GM12878 (cell line): ENCODE measurements at regions of chr11 and their contacts with region 1.

Region 1: DNA sequence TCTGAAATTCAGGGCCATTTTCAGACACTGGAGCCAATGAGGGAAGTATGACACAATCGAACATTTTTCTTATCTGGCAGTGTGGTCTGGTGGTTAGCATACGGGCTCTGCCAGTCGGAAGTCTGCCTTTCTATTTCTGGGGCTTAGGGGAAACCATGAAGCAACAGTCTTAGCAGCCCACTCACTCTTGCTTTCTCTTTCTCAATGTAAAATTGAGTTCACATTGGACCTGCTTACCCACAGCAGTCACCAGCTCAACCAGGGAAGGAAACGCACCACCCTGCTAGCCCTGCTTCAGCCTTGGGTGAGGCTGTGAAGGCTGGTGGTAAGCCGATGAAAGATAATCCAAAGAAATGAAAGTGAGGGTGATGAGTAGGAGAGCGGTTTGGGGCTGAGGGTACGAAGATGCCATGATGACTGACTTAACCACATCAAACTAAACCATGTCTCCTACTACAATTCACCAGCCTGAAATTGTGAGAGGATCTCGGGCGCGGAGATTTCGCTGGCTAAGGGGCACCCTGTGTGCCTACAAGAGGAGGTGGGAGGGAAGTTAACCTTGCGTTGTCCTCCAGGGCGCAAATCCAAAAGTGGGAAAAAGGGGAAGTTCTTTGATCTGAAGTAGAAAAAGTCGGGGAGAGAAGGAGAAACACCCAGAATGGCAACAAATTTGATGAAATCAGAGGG is 2.0 kb upstream of the LMO2 start:
- DNase-seq: peak; percentile 92
- ATAC-seq: peak; percentile 92
- H3K4me3 ChIP-seq: peak overlapping the region; percentile 73
- H3K27ac ChIP-seq: peak overlapping the region; percentile 76
- H3K4me1 ChIP-seq: peaks cover 29% of the 10 kb centered on the region
- H3K27me3 ChIP-seq: no peaks in the 10 kb centered on the region; a peak in 1 of 4 replicates
- CTCF ChIP-seq: no peak
- EP300 ChIP-seq: peak; percentile 62 to 63; a peak in 2 of 4 replicates
- POLR2A ChIP-seq: peak; percentile 89
- RAD21 ChIP-seq: 0 out of 2 replicates have a peak, but pooled peaks have one; percentile 5

Region 2: DNA sequence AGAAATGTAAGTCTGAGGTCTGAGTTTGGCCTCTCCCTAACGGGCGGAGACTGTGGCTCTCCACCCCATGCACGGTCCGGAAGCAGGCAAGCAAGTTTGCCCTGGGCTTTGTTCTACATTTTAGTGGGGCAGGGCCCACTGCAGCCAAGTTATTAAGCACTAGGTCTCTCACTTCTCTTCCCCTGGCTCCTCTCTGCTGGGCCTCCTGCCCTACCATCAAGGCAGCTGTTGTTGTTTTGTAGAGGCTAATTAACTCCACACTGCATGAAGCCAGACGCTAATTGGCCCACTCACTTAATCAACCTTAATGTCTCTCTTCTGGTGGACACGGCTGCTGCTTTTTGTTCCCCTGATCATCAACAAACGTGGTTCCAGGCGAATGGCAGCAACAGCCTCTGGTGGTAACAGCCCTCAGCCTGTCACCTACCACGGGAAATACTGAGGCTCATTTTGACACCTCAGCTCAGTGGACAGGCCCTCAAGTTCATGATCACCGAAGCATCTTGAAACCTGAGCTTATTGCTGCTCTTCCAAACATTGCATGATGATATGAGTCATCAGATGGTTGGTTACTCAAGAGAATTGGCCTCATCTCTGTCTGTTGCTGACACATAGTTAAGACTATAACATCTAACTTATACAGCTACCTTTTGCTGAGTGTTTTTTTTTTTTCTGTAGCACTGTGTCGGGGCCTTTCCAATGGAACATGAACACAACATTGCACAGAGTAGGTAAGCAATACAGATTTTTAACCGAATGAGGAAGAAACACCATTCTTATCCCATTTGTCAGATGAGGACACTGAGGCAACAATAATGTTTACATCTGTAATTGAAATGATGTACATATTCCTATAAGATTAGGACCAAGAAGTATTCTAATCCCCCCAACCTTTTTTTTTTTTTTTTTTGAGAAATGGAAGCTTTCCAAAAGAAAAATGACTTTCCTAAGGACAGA is 18.8 kb after region 1 on chr11:
- CTCF ChIA-PET with region 1: interaction called, 9 read pairs
- POLR2A ChIA-PET with region 1: interaction called, 4 read pairs
- RAD21 ChIA-PET with region 1: interaction called, 5 read pairs
- SMC1A ChIA-PET with region 1: interaction called, 14 read pairs
- in situ Hi-C with region 1: no loop called
- intact Hi-C with region 1: loop called (anchors 1 kb)
- DNase-seq: peak; percentile 82
- ATAC-seq: peak; percentile 98
- H3K4me3 ChIP-seq: no peak overlapping the region
- H3K27ac ChIP-seq: peak overlapping the region; percentile 82
- H3K4me1 ChIP-seq: peaks cover 12% of the 10 kb centered on the region
- H3K27me3 ChIP-seq: no peaks in the 10 kb centered on the region
- CTCF ChIP-seq: no peak
- EP300 ChIP-seq: 0 out of 4 replicates have a peak, but pooled peaks have one; percentile 16 to 45
- POLR2A ChIP-seq: peak; percentile 39; the same call in 1 of the 2 replicates
- RAD21 ChIP-seq: no peak

Region 3: DNA sequence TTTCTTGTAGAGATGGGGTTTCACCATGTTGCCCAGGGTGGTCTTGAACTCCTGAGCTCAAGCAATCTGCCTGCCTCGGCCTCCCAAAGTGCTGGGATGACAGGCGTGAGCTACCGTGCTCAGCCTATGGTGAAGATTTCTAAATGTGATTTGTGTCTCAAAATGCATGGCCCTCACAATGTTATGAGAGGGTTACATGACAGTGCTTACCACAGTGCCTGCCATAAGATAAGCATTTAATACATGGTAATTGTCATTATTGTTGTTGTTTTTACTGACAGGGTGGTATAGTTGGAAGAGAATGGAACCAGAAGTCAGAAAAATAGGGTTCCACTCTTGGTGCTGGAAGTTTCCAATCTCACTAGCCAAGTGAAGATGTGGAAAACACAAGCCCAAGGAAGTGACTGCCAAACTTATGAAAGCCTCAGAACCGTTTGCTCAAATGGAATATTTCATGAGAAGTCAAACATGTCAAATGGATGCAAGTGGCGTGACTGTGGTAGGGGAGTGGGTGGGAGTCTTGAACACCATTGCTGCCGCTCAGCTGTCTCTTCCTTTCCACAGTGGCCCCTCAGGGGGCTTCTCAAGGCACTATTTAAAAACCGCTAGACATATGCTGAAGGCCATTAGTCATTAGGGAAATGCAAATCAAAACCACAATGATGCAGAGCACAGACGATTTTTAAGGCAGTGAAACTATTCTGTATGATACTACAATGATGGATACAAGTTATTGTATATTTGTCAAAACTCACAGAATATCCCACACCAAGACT is 27.2 kb after region 1 on chr11:
- CTCF ChIA-PET with region 1: interaction called, 5 read pairs
- POLR2A ChIA-PET with region 1: interaction called, 4 read pairs
- RAD21 ChIA-PET with region 1: interaction called, 3 read pairs
- SMC1A ChIA-PET with region 1: interaction called, 3 read pairs
- in situ Hi-C with region 1: no loop called
- intact Hi-C with region 1: loop called (anchors 2 kb)
- DNase-seq: peak; percentile 69
- ATAC-seq: peak; percentile 97
- H3K4me3 ChIP-seq: no peak overlapping the region
- H3K27ac ChIP-seq: peak overlapping the region; percentile 70
- H3K4me1 ChIP-seq: peaks cover 18% of the 10 kb centered on the region
- H3K27me3 ChIP-seq: no peaks in the 10 kb centered on the region
- CTCF ChIP-seq: no peak
- EP300 ChIP-seq: peak; percentile 90 to 96
- POLR2A ChIP-seq: no peak
- RAD21 ChIP-seq: peak; percentile 22; the same call in 1 of the 2 replicates

Region 4: DNA sequence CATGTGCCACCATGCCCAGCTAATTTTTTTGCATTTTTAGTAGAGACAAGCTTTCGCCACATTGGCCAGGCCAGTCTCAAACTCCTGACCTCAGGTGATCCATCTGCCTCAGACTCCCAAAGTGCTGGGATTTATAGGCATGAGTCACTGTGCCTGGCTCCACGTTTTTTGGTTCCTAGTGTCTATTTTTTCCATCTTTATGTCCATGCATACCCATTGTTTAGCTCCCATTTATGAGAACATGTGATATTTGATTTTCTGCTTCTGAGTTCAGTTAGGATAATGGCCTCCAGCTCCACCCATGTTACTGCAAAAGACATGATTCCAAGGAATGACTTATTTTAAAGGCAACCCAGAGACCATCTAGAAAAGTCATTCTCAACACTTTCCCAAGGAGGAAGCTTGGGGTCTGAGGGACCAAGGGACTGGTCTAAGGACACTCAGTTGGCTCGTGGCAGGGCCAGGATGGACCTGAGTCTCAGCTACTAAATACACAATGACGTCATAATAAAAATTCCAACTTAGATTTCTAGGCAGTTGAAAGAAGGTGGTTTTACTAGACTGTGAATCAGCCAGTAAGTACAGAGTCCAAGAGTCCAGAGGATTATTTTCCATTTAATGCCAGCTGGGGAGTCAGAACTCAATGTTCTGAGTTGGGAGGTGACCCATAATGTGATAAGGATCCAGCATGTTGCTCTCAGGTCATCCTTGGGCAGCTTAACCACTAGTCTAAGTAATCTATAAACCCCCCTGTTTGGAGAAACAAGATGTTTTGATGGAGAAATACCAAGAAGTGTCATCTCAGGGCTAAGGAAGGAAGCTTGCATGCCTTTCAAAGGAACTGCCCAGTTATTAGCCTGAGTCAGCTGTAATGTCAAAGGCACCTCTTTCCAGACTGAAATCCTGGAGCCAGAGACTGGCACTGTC is 424.5 kb after region 1 on chr11:
- CTCF ChIA-PET with region 1: no interaction called
- POLR2A ChIA-PET with region 1: no interaction called
- RAD21 ChIA-PET with region 1: no interaction called
- SMC1A ChIA-PET with region 1: no interaction called
- in situ Hi-C with region 1: no loop called
- intact Hi-C with region 1: no loop called
- DNase-seq: no peak
- ATAC-seq: no peak
- H3K4me3 ChIP-seq: no peak overlapping the region
- H3K27ac ChIP-seq: no peak overlapping the region
- H3K4me1 ChIP-seq: peaks cover 6% of the 10 kb centered on the region; the same call in 1 of the 2 replicates
- H3K27me3 ChIP-seq: no peaks in the 10 kb centered on the region
- CTCF ChIP-seq: no peak
- EP300 ChIP-seq: no peak
- POLR2A ChIP-seq: no peak
- RAD21 ChIP-seq: no peak